MCF 10A (cell line): ENCODE measurements at regions of chr5 and their contacts with region 1.

Region 1: GRCh38 chr5:172006321-172007174 is at the start of gene FBXW11:
- DNase-seq: peak; percentile 99
- H3K4me3 Mint-ChIP-seq: peak within 1 kb of the TSS; percentile 90
- H3K27ac Mint-ChIP-seq: peak within 1 kb of the TSS; percentile 95
- H3K4me1 Mint-ChIP-seq: peaks cover 51% of the 10 kb centered on the region
- H3K27me3 Mint-ChIP-seq: no peaks in the 10 kb centered on the region
- CTCF ChIP-seq: no peak
- total RNA-seq, gene FBXW11: 64.7 and 82.7 TPM in 2 replicates

Region 2: DNA sequence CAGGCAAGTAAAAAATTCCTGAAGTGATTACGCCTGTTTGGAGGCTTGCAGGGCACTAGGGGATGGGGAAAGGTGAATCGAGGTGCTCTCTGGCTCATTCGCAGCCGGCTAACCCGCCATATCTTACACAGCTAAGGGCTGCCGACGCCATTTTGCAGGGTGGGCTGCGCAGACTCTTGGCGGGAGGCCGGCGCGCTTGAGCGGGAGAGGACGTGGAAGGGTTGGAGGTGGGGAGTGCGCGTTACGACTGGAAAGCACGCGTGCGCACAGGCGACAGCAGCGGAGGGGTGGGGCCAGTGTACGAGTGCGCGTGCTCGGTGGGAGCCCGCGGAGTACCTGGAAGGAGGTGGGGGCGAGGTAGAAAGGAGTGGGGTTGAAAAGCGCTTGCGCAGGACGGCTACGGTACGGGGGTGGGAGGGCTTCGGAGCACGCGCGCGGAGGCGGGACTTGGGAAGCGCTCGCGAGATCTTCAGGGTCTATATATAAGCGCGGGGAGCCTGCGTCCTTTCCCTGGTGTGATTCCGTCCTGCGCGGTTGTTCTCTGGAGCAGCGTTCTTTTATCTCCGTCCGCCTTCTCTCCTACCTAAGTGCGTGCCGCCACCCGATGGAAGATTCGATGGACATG is 619.1 kb before region 1 on chr5 and contains the start of gene NPM1:
- CTCF ChIA-PET with region 1: interaction called, 8 read pairs
- POLR2A ChIA-PET with region 1: interaction called, 34 read pairs
- intact Hi-C with region 1: no loop called
- DNase-seq: peak; percentile 99
- H3K4me3 Mint-ChIP-seq: peak within 1 kb of the TSS; percentile 99
- H3K27ac Mint-ChIP-seq: peak within 1 kb of the TSS; percentile 99
- H3K4me1 Mint-ChIP-seq: peaks cover 34% of the 10 kb centered on the region
- H3K27me3 Mint-ChIP-seq: no peaks in the 10 kb centered on the region
- CTCF ChIP-seq: no peak
- total RNA-seq, gene NPM1: 3,249 and 4,548 TPM in 2 replicates

Region 3: DNA sequence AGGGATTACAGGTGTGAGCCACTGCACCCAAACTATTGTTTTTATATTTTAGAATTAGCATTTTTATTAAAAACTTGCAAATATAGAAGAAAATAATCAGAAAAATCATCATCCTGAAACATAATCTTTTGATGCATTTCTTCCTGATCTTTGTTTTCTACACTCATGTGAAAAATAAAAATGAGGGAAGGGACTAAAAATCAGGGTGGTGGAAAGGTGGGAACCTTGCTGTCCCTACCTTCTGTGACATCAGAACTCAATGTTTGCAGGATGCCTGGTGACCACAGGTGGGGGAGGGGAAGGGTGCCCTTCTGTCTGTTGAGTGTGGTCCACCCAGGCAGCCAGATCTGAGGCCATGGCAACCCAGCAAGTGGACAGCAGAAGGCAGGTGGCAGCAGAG is 221.0 kb before region 1 on chr5 and contains the start of gene SMIM23:
- CTCF ChIA-PET with region 1: no interaction called
- POLR2A ChIA-PET with region 1: no interaction called
- intact Hi-C with region 1: no loop called
- DNase-seq: no peak
- H3K4me3 Mint-ChIP-seq: no peak within 1 kb of the TSS
- H3K27ac Mint-ChIP-seq: no peak within 1 kb of the TSS
- H3K4me1 Mint-ChIP-seq: peaks cover 10% of the 10 kb centered on the region
- H3K27me3 Mint-ChIP-seq: peaks cover 8% of the 10 kb centered on the region
- CTCF ChIP-seq: no peak
- total RNA-seq, gene SMIM23: not detected in 2 replicates

Region 4: DNA sequence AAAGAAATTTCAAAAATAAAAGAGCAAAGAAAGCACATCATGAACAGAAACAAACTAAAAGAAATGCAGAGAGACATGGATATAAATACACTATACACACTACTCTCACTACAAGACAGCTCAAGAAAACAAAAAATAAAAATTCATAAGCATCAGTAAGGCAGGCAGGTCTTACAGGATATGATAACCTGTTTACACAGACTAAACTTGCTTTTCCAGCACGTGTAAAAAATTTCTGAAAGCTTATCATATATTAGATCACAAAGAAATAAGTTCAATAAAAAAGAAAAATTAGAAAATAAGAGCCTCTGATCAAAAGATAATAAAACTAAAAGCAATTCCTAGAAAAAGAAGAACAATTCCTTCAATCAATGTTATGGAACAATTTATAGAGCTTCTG is 70.0 kb before region 1 on chr5:
- CTCF ChIA-PET with region 1: no interaction called
- POLR2A ChIA-PET with region 1: interaction called, 12 read pairs
- intact Hi-C with region 1: no loop called
- DNase-seq: no peak
- H3K4me3 Mint-ChIP-seq: no peak overlapping the region
- H3K27ac Mint-ChIP-seq: peak overlapping the region; percentile 27
- H3K4me1 Mint-ChIP-seq: peaks cover 6% of the 10 kb centered on the region
- H3K27me3 Mint-ChIP-seq: no peaks in the 10 kb centered on the region
- CTCF ChIP-seq: no peak

Region 5: GRCh38 chr5:171984748-171985419 is 21.7 kb before region 1 on chr5:
- CTCF ChIA-PET with region 1: interaction called, 6 read pairs
- POLR2A ChIA-PET with region 1: interaction called, 45 read pairs
- intact Hi-C with region 1: no loop called
- DNase-seq: no peak
- H3K4me3 Mint-ChIP-seq: no peak overlapping the region
- H3K27ac Mint-ChIP-seq: no peak overlapping the region
- H3K4me1 Mint-ChIP-seq: peaks cover 14% of the 10 kb centered on the region
- H3K27me3 Mint-ChIP-seq: no peaks in the 10 kb centered on the region
- CTCF ChIP-seq: no peak

Region 6: GRCh38 chr5:172044631-172045314 is 38.2 kb after region 1 on chr5:
- CTCF ChIA-PET with region 1: interaction called, 13 read pairs
- POLR2A ChIA-PET with region 1: interaction called, 3 read pairs
- intact Hi-C with region 1: loop called (anchors 2 kb)
- DNase-seq: no peak
- H3K4me3 Mint-ChIP-seq: no peak overlapping the region
- H3K27ac Mint-ChIP-seq: peak overlapping the region; percentile 52
- H3K4me1 Mint-ChIP-seq: peaks cover 6% of the 10 kb centered on the region
- H3K27me3 Mint-ChIP-seq: no peaks in the 10 kb centered on the region
- CTCF ChIP-seq: no peak

Region 7: DNA sequence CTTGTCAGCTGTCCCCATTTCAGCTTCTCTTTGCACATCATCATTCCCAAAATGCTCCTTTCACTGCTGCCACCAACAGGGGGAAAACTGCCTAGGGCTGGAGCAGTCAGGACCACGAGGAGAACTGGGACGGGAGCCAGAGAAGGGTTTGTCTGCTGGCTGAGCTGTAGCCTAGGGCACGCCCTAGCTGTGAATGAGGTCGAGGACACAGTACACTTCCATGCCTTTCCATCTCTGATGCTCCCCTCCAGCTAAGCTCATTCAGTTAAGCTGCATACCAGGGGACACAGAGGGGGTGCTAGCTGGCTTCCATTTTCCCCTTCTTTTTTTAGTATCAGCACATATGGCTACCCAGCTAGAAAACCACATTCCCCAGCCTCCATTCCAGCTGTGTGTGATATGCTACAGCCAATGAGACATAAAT is 116.7 kb after region 1 on chr5:
- CTCF ChIA-PET with region 1: no interaction called
- POLR2A ChIA-PET with region 1: no interaction called
- intact Hi-C with region 1: no loop called
- DNase-seq: peak; percentile 73
- H3K4me3 Mint-ChIP-seq: no peak overlapping the region
- H3K27ac Mint-ChIP-seq: no peak overlapping the region
- H3K4me1 Mint-ChIP-seq: peaks cover 2% of the 10 kb centered on the region
- H3K27me3 Mint-ChIP-seq: no peaks in the 10 kb centered on the region
- CTCF ChIP-seq: no peak

Region 8: GRCh38 chr5:172293054-172293744 is 286.7 kb after region 1 on chr5:
- CTCF ChIA-PET with region 1: interaction called, 9 read pairs
- POLR2A ChIA-PET with region 1: no interaction called
- intact Hi-C with region 1: loop called (anchors 5 kb)
- DNase-seq: peak; percentile 87
- H3K4me3 Mint-ChIP-seq: no peak overlapping the region
- H3K27ac Mint-ChIP-seq: no peak overlapping the region
- H3K4me1 Mint-ChIP-seq: peaks cover 9% of the 10 kb centered on the region
- H3K27me3 Mint-ChIP-seq: peaks cover 12% of the 10 kb centered on the region
- CTCF ChIP-seq: peak; percentile 97